Psoas muscle (tissue), 8 donors: ENCODE measurements at regions of chr7 and their contacts with region 1.

Region 1: GRCh38 chr7:32803406-32804141 is 88.0 kb downstream of the KBTBD2 start:
- DNase-seq: no peak
- ATAC-seq: no peak
- H3K4me3 ChIP-seq: no peak overlapping the region
- H3K27ac ChIP-seq: no peak overlapping the region
- H3K4me1 ChIP-seq: no peaks in the 10 kb centered on the region
- H3K27me3 ChIP-seq: no peaks in the 10 kb centered on the region
- CTCF ChIP-seq: no peak

Region 2: GRCh38 chr7:32631590-32632449 is 171.8 kb before region 1 on chr7:
- intact Hi-C with region 1: no loop called
- DNase-seq: no peak
- ATAC-seq: no peak
- H3K4me3 ChIP-seq: no peak overlapping the region
- H3K27ac ChIP-seq: no peak overlapping the region
- H3K4me1 ChIP-seq: no peaks in the 10 kb centered on the region
- H3K27me3 ChIP-seq: no peaks in the 10 kb centered on the region
- CTCF ChIP-seq: no peak

Region 3: DNA sequence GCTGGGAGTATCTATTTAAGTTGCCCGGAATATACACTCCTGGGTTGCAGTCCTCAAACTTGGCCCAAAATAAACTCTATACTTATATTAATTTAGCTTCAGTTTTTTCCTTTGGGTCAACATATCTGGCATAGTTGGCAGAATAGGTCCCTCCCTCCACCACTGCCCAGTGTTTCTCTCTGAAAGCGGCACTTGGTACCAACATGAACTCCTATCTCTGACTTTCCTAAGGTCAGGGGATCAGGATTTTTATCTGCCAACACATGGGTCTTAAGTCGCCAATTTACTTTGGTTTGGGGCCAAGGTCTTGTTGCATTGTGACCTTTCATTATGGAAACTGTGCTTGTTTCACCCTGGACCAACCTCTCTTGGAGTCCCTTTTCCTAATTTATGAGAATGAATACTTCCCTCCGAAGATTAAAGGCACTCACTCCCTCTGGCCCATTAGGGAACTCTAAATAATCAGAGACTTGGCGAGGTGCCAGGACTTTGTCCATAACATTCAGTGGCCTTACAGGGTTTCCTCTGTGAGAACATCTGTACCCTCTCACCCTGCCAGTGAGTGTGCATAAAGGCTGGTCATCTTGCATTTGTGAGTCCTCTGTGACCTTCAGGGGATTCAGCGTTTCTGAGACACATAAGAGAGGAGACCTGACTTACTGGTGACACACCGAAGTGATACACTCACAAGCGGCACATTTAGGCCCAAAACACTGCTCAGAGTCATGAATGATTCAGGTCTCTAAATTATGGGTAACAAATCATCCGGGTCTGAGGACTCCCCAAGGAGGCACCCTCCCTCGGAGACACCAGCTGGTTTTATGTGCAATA is 134.0 kb after region 1 on chr7:
- intact Hi-C with region 1: loop called in 1 of 2 experiments (anchors 5 kb)
- DNase-seq: peak; percentile 38 to 65
- ATAC-seq: peak in 3 of 4 donors; percentile 53 to 85 (median 77)
- H3K4me3 ChIP-seq: no peak overlapping the region
- H3K27ac ChIP-seq: peak overlapping the region; percentile 13
- H3K4me1 ChIP-seq: peaks cover 31% of the 10 kb centered on the region
- H3K27me3 ChIP-seq: no peaks in the 10 kb centered on the region
- CTCF ChIP-seq: no peak

Region 4: GRCh38 chr7:33040803-33041516 is 237.4 kb after region 1 on chr7:
- intact Hi-C with region 1: loop called in 1 of 2 experiments (anchors 10 kb)
- DNase-seq: no peak
- ATAC-seq: peak; percentile 89 to 92 (median 91)
- H3K4me3 ChIP-seq: peak overlapping the region; percentile 76
- H3K27ac ChIP-seq: peak overlapping the region; percentile 83
- H3K4me1 ChIP-seq: peaks cover 34% of the 10 kb centered on the region
- H3K27me3 ChIP-seq: no peaks in the 10 kb centered on the region
- CTCF ChIP-seq: no peak